ENCODE measurements at regions of chr11 and their contacts with region 1.

Region 1: GRCh38 chr11:73393479-73394380 is 17.5 kb downstream of the RELT start:
- DNase-seq: peak; percentile 74 to 83
- H3K4me3 ChIP-seq: no peak overlapping the region
- H3K27ac ChIP-seq: no peak overlapping the region
- H3K4me1 ChIP-seq: peaks cover 0 to 10% (median 7%) of the 10 kb centered on the region in 4 donors
- H3K27me3 ChIP-seq: no peaks in the 10 kb centered on the region
- CTCF ChIP-seq: peak; percentile 77 to 92

Region 2: DNA sequence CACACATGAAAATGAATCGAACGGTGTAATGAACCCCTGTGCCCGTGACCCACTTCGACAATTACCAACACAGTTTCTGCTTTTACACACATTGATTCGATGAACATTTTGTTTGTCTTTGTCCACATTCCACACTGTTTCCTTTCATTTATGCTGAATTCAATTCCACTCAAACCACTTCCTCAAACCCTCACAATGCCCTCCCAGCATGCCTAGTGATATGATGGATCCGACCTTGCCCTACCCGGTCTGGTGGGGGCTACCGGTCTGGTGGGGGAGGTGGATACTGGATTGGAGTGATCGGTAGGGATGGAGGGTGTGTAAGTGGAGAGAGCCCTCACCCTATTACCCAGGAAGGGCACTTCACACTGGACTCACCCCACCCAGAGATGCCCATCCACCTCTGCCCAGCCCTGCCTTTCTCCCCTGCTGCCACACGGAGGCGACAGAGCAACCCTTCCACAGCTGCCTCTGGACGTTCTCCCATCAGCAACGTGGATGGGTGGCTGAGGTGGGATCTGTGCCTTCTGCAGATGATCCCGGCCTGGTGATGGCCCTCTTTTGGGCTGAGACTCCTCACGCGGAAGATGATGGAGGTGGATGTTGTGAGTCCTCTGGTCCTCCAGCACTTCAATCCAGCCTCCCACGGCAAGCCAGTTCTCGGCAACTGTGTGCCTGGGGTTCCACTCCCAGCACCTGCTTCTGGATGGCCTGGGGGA is 208.6 kb before region 1 on chr11:
- intact Hi-C with region 1: loop called (anchors 10 kb)
- DNase-seq: peak; percentile 57 to 86
- H3K4me3 ChIP-seq: no peak overlapping the region
- H3K27ac ChIP-seq: peak overlapping the region; percentile 76 to 77
- H3K4me1 ChIP-seq: peaks cover 0 to 38% (median 30%) of the 10 kb centered on the region in 4 donors
- H3K27me3 ChIP-seq: no peaks in the 10 kb centered on the region
- CTCF ChIP-seq: peak; percentile 78 to 80

Region 3: DNA sequence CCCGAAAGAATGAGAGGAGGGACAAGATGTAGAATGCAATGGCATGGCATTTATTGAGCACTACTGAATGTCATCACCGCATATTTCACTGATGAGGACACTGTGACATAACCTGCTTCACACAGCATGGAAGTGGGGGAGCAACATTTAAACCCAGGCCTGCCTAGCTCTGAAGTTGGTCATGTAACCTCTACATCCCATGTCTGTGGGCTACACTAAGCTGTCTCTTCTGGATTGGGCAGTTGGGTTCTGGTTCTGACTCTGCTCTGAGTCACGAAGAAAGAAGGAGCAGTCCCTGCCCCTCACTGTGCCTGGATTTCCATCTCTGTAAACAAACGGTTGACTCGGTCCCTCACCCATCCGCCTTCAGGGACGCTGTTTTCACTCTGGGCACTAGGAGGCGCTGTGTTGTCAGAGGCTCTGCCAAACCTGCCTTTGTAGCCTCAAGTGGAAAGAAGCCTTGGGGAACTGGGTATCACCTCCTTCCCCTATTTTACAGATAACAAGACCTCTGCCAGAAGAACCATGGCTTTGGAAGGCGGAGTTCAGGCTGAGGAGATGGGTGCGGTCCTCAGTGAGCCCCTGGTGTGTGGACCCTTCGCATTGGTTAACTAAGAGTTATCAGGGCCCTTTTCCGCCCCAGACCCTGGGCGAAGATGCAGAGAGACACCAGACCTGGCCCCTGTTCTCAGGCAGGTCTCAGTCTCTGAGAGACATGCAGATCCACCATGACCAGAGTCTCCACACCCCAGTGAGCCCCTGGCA is 98.3 kb before region 1 on chr11:
- intact Hi-C with region 1: loop called (anchors 1 kb)
- DNase-seq: peak; percentile 61 to 84
- H3K4me3 ChIP-seq: no peak overlapping the region
- H3K27ac ChIP-seq: peak overlapping the region in 1 of 2 donors; percentile 10
- H3K4me1 ChIP-seq: peaks cover 0 to 11% (median 7%) of the 10 kb centered on the region in 4 donors
- H3K27me3 ChIP-seq: no peaks in the 10 kb centered on the region
- CTCF ChIP-seq: peak; percentile 83 to 88

Region 4: DNA sequence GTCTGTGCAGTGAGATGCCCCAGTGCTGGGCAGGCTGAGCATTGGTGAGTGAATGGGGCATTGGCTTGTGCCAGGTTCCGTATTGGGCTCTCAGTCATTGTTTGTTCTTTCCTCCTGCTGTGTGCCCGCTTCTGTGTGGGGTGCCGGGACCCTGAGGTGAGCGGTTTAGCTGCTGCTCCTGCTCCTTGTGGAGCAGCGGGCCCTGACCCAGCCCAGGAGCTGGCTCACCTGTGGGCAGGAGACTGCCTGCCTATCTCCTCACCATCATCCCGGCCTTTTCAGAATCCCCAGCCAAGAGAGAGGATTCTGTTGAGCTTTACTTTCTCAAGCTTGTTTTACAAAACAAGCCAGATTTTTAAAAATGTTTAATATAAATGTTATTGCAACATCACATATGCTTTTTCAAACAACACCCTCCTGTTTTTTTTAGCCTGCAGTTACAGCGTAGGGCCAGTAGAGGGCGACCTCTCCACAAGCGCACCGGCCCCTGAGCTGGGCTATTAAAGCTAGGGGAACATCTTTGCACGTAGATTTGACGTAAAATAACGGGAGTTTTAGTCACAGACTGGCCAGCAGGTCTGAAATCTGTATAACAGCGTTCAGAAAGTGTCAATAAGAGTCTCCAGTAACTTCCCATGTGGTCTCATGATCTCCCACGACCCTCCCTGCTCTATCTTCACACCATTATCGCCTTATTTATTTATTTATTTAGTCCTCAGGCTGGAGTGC is 42.7 kb before region 1 on chr11:
- intact Hi-C with region 1: loop called (anchors 1 kb)
- DNase-seq: peak in 1 of 2 donors; percentile 54
- H3K4me3 ChIP-seq: no peak overlapping the region
- H3K27ac ChIP-seq: peak overlapping the region; percentile 39 to 64
- H3K4me1 ChIP-seq: peaks cover 0 to 50% (median 21%) of the 10 kb centered on the region in 4 donors
- H3K27me3 ChIP-seq: no peaks in the 10 kb centered on the region
- CTCF ChIP-seq: peak; percentile 93 to 98

Region 5: GRCh38 chr11:73810637-73811036 is 416.9 kb after region 1 on chr11:
- intact Hi-C with region 1: no loop called
- DNase-seq: no peak
- H3K4me3 ChIP-seq: no peak overlapping the region
- H3K27ac ChIP-seq: no peak overlapping the region
- H3K4me1 ChIP-seq: no peaks in the 10 kb centered on the region
- H3K27me3 ChIP-seq: no peaks in the 10 kb centered on the region
- CTCF ChIP-seq: no peak